ENCODE measurements at regions of chr6 and their contacts with region 1.

Region 1: GRCh38 chr6:116100419-116101301 is at the start of gene NT5DC1:
- DNase-seq: peak; percentile 79
- ATAC-seq: peak; percentile 92
- H3K4me3 ChIP-seq: peak within 1 kb of the TSS; percentile 68 to 93 (median 92)
- H3K27ac ChIP-seq: peak within 1 kb of the TSS; percentile 90
- H3K4me1 ChIP-seq: peaks cover 61% of the 10 kb centered on the region
- H3K27me3 ChIP-seq: no peaks in the 10 kb centered on the region; a peak in 1 of 5 replicates
- CTCF ChIP-seq: peak; percentile 68
- EP300 ChIP-seq: peak in 1 of 2 experiments; percentile 9; a peak in 1 of 4 replicates
- POLR2A ChIP-seq: peak; percentile 93 to 98
- RAD21 ChIP-seq: peak; percentile 84
- total RNA-seq, gene NT5DC1: 56.1 and 90.6 TPM in 2 replicates

Region 2: DNA sequence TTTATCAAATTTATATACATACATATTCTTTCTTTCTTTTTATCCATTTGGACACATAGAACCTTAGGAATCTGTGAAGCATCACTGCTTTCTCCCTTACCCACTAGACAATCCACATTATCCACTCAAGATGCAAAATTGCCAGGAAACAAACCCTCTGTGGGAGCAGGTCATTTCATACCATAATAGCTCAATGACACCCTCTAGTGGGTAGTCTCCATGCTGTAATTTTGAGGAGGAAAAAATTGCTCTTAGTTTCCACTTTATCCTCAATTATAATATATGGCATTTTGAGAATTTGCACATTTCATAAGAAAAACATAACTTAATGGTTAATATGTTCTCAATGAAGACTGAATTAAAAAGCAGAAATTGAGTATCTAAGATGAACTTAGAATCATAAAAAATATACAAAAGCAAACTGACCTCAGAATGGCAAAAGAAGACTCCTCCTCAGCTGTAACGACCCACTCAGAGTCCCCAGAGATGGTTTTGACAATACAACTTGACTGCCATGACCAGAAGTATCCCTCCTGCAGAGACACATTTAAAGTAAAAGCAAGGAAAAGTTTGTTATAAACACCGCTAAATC is 204.0 kb before region 1 on chr6:
- CTCF ChIA-PET with region 1: no interaction called
- POLR2A ChIA-PET with region 1: no interaction called
- in situ Hi-C with region 1: no loop called
- intact Hi-C with region 1: loop called (anchors 5 kb)
- DNase-seq: peak; percentile 14
- ATAC-seq: peak; percentile 73
- H3K4me3 ChIP-seq: no peak overlapping the region
- H3K27ac ChIP-seq: no peak overlapping the region
- H3K4me1 ChIP-seq: peaks cover 8% of the 10 kb centered on the region
- H3K27me3 ChIP-seq: no peaks in the 10 kb centered on the region; a peak in 1 of 5 replicates
- CTCF ChIP-seq: peak; percentile 68
- EP300 ChIP-seq: no peak
- POLR2A ChIP-seq: no peak
- RAD21 ChIP-seq: peak; percentile 29; the same call in 1 of the 2 replicates

Region 3: GRCh38 chr6:116010790-116011401 is 89.8 kb before region 1 on chr6:
- CTCF ChIA-PET with region 1: interaction called, 68 read pairs
- POLR2A ChIA-PET with region 1: interaction called, 14 read pairs
- in situ Hi-C with region 1: loop called (anchors 5 kb)
- intact Hi-C with region 1: loop called (anchors 1 kb)
- DNase-seq: peak; percentile 75
- ATAC-seq: peak; percentile 84
- H3K4me3 ChIP-seq: no peak overlapping the region
- H3K27ac ChIP-seq: no peak overlapping the region
- H3K4me1 ChIP-seq: peaks cover 54% of the 10 kb centered on the region
- H3K27me3 ChIP-seq: no peaks in the 10 kb centered on the region
- CTCF ChIP-seq: peak; percentile 89
- EP300 ChIP-seq: no peak
- POLR2A ChIP-seq: no peak
- RAD21 ChIP-seq: peak; percentile 66

Region 4: GRCh38 chr6:116060572-116061283 is 39.9 kb before region 1 on chr6 and contains the start of gene FRK:
- CTCF ChIA-PET with region 1: no interaction called
- POLR2A ChIA-PET with region 1: interaction called, 51 read pairs
- in situ Hi-C with region 1: no loop called
- intact Hi-C with region 1: loop called (anchors 1 kb)
- DNase-seq: peak; percentile 93
- ATAC-seq: peak; percentile 97
- H3K4me3 ChIP-seq: peak within 1 kb of the TSS; percentile 74 to 90 (median 88)
- H3K27ac ChIP-seq: peak within 1 kb of the TSS; percentile 87
- H3K4me1 ChIP-seq: peaks cover 37% of the 10 kb centered on the region
- H3K27me3 ChIP-seq: no peaks in the 10 kb centered on the region; a peak in 1 of 5 replicates
- CTCF ChIP-seq: no peak
- EP300 ChIP-seq: 0 out of 4 replicates have a peak, but pooled peaks of 1 of the 2 experiments have one; percentile 34
- POLR2A ChIP-seq: peak; percentile 78 to 88
- RAD21 ChIP-seq: no peak
- total RNA-seq, gene FRK: 2.9 and 4.5 TPM in 2 replicates

Region 5: GRCh38 chr6:116111552-116112528 is 11.2 kb after region 1 on chr6:
- CTCF ChIA-PET with region 1: interaction called, 4 read pairs
- POLR2A ChIA-PET with region 1: interaction called, 21 read pairs
- in situ Hi-C with region 1: no loop called
- intact Hi-C with region 1: no loop called
- DNase-seq: peak; percentile 60
- ATAC-seq: peak; percentile 94
- H3K4me3 ChIP-seq: no peak overlapping the region
- H3K27ac ChIP-seq: no peak overlapping the region
- H3K4me1 ChIP-seq: peaks cover 8% of the 10 kb centered on the region
- H3K27me3 ChIP-seq: no peaks in the 10 kb centered on the region
- CTCF ChIP-seq: peak; percentile 76
- EP300 ChIP-seq: no peak
- POLR2A ChIP-seq: no peak
- RAD21 ChIP-seq: no peak

Region 6: DNA sequence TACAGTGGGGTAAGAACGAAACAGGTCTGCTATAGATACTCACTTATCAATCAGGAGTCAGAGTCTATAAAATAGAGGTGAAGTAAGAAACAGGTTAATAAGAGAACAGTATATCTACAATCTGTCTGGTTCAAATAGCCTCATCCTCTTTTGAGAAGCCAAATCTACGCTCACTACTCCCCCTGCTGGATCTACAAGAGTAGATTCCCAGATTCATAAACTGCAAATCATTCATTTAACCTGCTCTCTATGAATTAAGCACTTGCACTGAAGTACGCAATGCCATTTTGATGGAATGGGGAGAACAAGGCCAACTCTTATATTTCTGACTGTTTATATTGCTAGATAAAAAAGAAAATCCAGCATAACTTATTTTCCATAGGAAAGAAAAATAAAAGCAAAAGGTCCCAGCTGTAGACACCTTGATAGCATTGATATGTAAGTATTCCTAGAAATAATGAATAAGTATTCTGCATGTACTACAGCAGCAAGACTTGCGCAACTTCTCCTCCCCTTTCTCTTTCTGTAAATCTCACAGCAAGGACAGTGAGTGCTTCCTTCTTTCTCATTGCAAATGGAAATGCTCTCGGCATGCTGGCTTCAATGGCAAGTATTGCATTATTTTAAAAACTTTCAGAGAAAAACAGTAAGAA is 868.7 kb after region 1 on chr6:
- CTCF ChIA-PET with region 1: no interaction called
- POLR2A ChIA-PET with region 1: no interaction called
- in situ Hi-C with region 1: no loop called
- intact Hi-C with region 1: no loop called
- DNase-seq: peak; percentile 64
- ATAC-seq: peak; percentile 89
- H3K4me3 ChIP-seq: no peak overlapping the region
- H3K27ac ChIP-seq: no peak overlapping the region
- H3K4me1 ChIP-seq: no peaks in the 10 kb centered on the region
- H3K27me3 ChIP-seq: no peaks in the 10 kb centered on the region
- CTCF ChIP-seq: peak; percentile 84
- EP300 ChIP-seq: no peak
- POLR2A ChIP-seq: no peak
- RAD21 ChIP-seq: peak; percentile 61